BJ (cell line): ENCODE measurements at regions of chr21 and their contacts with region 1.

Region 1: GRCh38 chr21:33608559-33608958 is 20.1 kb upstream of the DONSON start:
- DNase-seq: no peak
- H3K4me3 ChIP-seq: no peak overlapping the region
- H3K27me3 ChIP-seq: no peaks in the 10 kb centered on the region
- CTCF ChIP-seq: no peak

Region 2: DNA sequence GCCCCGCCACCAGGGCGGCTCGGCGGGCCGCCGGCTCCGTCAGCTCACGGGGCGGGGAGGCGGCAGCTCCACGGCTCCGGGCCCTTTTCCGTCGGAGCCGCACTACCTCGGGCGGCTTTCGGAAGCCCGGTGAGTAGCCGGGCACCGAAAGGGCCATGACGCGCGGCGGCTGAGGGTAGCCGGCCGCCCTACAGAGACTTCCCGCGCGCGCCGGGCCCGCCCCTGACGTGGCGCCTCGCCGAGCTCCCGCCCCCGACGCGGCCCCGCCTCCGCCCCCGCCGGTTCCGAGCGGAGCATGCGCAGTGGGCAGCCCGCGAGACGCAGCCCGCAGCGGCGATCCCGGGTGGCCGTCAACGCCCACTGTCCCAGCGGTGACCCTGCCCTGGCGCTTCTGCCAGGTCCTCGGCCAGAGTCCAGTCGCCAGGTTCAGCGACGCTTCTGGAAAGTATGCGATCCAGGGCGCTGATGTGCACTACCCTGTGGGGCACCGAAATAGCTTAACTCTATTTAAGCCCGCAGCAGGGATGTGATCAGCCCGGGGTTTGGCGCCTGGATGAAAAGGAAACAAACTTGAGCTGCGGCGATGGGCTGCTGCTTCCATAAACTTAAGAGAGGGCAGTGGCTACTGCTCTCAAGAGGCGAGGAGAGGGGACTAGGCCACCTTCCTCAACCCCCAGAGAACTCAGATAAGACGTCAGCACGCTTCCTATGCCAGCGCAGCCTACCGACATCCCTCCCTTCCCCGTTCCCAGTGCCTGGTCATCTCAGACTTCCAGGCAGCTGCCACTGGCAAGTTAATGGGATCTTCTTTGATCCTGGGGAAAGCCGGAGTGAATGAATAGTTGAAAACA is 19.8 kb before region 1 on chr21 and contains the start of gene DONSON:
- CTCF ChIA-PET with region 1: interaction called, 36 read pairs
- POLR2A ChIA-PET with region 1: no interaction called
- DNase-seq: peak; percentile 19
- H3K4me3 ChIP-seq: peak within 1 kb of the TSS; percentile 86
- H3K27me3 ChIP-seq: no peaks in the 10 kb centered on the region
- CTCF ChIP-seq: no peak
- polyA plus RNA-seq, gene DONSON: 12.7 and 19.4 TPM in 2 replicates

Region 3: DNA sequence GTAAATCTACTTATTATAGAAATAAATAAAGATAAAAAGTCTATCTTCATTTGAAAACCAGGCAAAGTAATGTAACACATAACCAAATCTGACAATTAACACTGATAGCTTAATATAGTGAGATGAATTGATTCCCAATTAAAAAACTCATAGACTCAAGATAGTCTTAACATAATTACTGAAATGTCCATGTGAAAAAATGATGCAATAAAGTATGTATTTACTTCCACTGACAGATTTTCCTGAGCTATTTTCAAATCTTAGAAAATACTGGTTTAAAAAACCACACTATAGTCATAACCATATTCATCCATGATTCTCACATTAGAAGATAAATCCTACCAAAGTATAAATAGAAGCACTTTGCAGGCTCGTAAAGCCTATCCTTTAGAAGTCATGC is 10.5 kb before region 1 on chr21:
- CTCF ChIA-PET with region 1: interaction called, 11 read pairs
- POLR2A ChIA-PET with region 1: no interaction called
- DNase-seq: no peak
- H3K4me3 ChIP-seq: no peak overlapping the region
- H3K27me3 ChIP-seq: no peaks in the 10 kb centered on the region
- CTCF ChIP-seq: no peak

Region 4: DNA sequence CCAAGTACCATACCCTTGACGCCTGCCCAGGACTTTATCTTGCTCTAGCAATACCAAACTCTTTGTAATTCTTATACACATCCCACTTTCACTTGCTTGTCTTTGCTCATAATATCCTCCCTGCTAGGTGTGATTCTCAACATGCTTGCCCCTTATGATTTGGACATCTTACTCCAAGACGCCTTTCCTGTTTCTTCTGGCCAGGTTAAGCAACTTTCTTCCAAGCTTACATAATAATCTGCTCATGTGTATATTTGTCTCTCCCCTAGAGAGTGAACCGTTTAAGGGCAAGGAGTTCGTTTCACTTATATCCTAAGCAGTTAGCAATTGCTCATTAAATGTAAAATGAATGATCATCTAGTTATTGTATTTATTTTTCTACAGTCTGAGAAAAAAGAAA is 11.2 kb after region 1 on chr21:
- CTCF ChIA-PET with region 1: interaction called, 17 read pairs
- POLR2A ChIA-PET with region 1: no interaction called
- DNase-seq: no peak
- H3K4me3 ChIP-seq: no peak overlapping the region
- H3K27me3 ChIP-seq: no peaks in the 10 kb centered on the region
- CTCF ChIP-seq: no peak

Region 5: DNA sequence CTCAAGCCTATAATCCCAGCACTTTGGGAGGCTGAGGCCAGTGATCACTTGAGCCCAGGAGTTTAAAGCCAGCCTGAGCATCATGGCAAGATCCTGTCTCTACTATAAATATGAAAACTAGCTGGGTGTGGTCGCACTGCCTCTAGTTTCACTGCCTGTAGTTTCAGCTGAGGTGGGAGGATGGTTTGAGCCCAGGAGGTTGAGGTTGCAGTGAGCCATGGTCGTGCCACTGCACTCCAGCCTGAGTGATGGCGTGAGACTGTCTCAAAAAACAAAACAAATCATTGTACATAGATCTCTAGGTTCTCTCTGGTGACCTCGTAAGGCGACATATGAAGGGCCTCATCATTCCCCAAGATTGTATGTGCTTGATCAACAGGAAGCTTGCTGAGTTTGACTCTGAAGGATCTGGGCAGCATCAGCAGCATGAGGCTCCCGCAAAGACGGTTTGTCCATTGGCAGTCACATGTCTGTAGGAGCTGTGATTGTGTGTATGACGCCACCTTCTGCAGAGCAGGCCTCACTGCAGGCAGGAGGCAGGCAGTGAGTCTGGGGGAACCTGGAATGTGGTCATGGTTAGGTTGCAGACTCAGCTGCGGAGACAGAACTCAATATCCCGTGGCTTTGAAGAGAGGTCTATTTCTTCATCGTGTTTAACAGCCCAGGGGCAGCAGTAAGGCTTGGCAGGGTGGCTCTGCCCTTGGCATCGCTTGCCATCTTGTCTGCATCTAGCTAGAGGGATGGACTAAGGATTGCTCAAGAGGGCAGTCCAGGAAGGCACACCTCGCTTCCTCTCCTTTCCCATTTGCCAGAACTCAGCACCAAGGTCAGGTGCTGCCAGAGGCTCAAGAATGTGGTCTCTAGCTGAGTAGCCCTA is 293.1 kb after region 1 on chr21:
- CTCF ChIA-PET with region 1: interaction called, 10 read pairs
- POLR2A ChIA-PET with region 1: no interaction called
- DNase-seq: no peak
- H3K4me3 ChIP-seq: no peak overlapping the region
- H3K27me3 ChIP-seq: no peaks in the 10 kb centered on the region
- CTCF ChIP-seq: peak; percentile 67

Region 6: DNA sequence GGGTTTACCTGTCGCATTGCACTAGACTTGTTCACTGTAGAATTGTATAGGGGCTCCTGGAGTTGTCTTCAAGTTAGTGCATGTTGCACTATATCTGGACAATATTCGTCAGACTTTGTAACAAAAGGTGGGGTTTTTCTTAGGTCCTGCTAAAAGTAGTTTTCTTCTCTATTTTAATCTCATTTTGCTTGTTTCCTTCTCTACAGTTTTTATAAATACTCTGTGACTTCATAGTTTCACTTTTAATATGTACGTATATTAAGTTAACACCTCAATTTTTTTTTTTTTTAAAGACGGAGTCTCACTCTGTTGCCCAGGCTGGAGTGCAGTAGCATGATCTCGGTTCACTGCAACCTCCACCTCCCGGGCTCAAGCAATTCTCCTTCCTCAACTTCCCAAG is 438.4 kb after region 1 on chr21:
- CTCF ChIA-PET with region 1: no interaction called
- POLR2A ChIA-PET with region 1: no interaction called
- DNase-seq: no peak
- H3K4me3 ChIP-seq: no peak overlapping the region
- H3K27me3 ChIP-seq: no peaks in the 10 kb centered on the region
- CTCF ChIP-seq: no peak